CD4-positive, alpha-beta memory T cell (primary cell): ENCODE measurements at regions of chr2 and their contacts with region 1.

Region 1: DNA sequence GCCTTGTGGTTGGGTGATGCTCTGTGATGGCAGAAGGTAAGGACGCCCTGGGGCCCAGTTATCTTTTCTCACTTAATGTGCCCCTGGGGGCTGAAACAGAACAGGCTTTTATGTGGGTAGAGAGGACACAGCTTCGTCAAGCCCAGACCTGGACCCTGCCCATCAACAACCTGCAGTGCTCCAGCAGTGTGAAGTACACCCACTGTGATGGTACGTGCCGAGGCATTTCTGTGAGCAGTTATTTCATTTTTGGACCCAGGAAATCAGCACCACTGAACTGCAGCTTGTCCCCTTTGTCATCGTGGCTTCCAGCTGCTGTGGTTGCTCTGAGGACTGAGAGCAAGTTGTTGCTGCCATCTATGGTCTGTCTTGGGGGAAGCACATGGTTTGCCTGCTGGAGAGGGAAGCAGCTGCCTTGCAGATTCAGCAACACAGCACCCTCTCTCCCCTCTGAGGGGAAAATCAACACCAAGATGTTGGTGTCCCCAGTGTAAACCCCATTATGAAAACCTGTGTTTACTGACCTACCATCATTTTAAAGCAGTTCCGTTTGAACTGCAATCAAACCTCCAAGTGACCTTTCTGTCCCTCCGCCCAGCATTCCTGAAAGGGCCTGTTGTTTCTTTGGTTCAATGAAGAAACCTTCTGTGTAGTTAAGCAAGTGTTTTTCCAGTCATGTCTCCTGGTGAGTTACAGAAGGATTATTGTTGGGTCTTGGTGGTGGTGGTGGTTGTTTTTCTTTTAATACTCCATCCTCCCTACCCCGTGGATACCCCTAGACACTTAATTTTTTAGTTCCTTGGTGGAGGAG is 158.2 kb downstream of the MGAT5 start:
- DNase-seq: peak; percentile 68 to 77 (median 73)
- H3K4me3 ChIP-seq: no peak overlapping the region
- H3K4me3 Mint-ChIP-seq: peak overlapping the region in 4 of 8 donors; percentile 6 to 18 (median 14)
- H3K27ac ChIP-seq: no peak overlapping the region
- H3K27ac Mint-ChIP-seq: peak overlapping the region in 6 of 7 donors; percentile 36 to 83 (median 56)
- H3K4me1 ChIP-seq: peaks cover 51% of the 10 kb centered on the region
- H3K4me1 Mint-ChIP-seq: peaks cover 48 to 56% (median 54%) of the 10 kb centered on the region in 4 donors
- H3K27me3 ChIP-seq: no peaks in the 10 kb centered on the region
- H3K27me3 Mint-ChIP-seq: no peaks in the 10 kb centered on the region

Region 2: DNA sequence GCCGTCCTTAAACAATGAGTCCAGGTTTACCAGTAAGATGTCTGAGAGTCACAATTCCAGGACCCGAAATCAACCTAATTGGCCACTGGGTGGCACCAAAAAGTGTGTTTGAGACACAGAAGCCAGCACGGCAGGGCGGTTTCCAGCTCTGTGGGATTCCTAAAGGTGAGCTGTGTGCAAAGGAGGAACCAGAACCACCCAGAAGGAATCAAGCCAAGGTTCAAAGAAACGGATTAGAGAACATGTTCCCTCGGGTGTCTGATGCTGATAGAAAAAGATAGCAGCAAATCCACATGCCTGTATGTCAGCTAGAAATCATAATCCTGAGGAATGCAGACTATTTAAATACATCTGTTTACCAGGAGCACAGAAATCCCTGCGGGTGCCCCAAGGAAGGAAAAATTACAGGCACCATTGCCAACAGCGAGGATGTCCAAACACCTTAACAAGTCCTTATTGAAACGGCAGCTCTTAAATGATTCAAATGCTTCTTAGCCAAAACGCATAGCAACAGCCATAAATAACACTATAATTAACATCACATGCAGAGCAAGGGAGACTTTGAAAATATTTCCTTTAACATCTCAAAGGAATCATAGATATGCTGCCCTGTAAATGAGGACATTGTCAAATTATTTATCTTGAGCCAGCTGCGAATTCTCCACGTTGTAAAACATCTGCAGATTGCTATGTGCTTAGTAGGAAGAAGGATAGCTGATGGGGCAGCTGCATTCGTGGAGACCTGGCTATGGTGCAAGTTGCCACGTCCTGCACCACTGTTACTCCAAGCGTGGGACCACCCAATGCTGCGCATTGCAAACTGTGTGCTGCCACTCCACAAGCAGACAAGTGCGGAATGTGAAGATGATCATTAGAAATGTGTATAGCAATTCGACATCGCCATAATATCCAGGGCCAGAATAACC is 525.0 kb before region 1 on chr2:
- CTCF ChIA-PET with region 1: interaction called, 53 read pairs
- POLR2A ChIA-PET with region 1: no interaction called
- intact Hi-C with region 1: loop called (anchors 1 kb)
- DNase-seq: peak; percentile 43 to 50 (median 50)
- H3K4me3 ChIP-seq: no peak overlapping the region
- H3K4me3 Mint-ChIP-seq: no peak overlapping the region
- H3K27ac ChIP-seq: no peak overlapping the region
- H3K27ac Mint-ChIP-seq: no peak overlapping the region
- H3K4me1 ChIP-seq: no peaks in the 10 kb centered on the region
- H3K4me1 Mint-ChIP-seq: peaks cover 0 to 2% (median under 1%) of the 10 kb centered on the region in 4 donors
- H3K27me3 ChIP-seq: no peaks in the 10 kb centered on the region
- H3K27me3 Mint-ChIP-seq: peaks cover 0 to 7% of the 10 kb centered on the region in 2 donors

Region 3: DNA sequence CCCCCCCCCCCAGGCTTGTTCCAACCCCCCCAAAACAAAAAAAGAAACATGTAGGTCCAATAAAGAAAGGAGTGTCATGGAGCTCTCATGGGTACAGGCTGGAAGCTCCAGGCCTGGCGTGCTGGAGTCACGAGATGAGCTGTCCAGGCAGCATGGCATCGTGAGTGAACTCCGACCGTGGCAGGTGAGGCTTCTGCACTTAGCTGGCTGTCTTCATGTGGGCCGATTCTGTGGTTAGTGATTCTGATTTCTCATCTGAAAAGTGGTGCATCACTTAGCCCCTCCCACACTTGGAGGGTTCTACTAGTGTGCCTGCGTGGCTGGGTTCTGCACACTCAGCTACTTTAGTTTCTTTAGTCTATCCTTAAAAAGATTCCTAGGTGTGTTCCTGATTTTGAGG is 284.5 kb before region 1 on chr2:
- CTCF ChIA-PET with region 1: interaction called, 14 read pairs
- POLR2A ChIA-PET with region 1: interaction called, 58 read pairs
- intact Hi-C with region 1: no loop called
- DNase-seq: peak; percentile 21 to 59 (median 34)
- H3K4me3 ChIP-seq: no peak overlapping the region
- H3K4me3 Mint-ChIP-seq: peak overlapping the region in 7 of 8 donors; percentile 47 to 82 (median 63)
- H3K27ac ChIP-seq: no peak overlapping the region
- H3K27ac Mint-ChIP-seq: peak overlapping the region; percentile 12 to 85 (median 73)
- H3K4me1 ChIP-seq: peaks cover 82% of the 10 kb centered on the region
- H3K4me1 Mint-ChIP-seq: peaks cover 67 to 92% (median 80%) of the 10 kb centered on the region in 4 donors
- H3K27me3 ChIP-seq: no peaks in the 10 kb centered on the region
- H3K27me3 Mint-ChIP-seq: no peaks in the 10 kb centered on the region

Region 4: GRCh38 chr2:134198006-134198634 is 213.9 kb before region 1 on chr2:
- CTCF ChIA-PET with region 1: interaction called, 11 read pairs
- POLR2A ChIA-PET with region 1: no interaction called
- intact Hi-C with region 1: no loop called
- DNase-seq: no peak
- H3K4me3 ChIP-seq: no peak overlapping the region
- H3K4me3 Mint-ChIP-seq: peak overlapping the region; percentile 18 to 82 (median 74)
- H3K27ac ChIP-seq: no peak overlapping the region
- H3K27ac Mint-ChIP-seq: peak overlapping the region; percentile 72 to 88 (median 83)
- H3K4me1 ChIP-seq: peaks cover 87% of the 10 kb centered on the region
- H3K4me1 Mint-ChIP-seq: peaks cover 73 to 94% (median 84%) of the 10 kb centered on the region in 4 donors
- H3K27me3 ChIP-seq: no peaks in the 10 kb centered on the region
- H3K27me3 Mint-ChIP-seq: no peaks in the 10 kb centered on the region

Region 5: DNA sequence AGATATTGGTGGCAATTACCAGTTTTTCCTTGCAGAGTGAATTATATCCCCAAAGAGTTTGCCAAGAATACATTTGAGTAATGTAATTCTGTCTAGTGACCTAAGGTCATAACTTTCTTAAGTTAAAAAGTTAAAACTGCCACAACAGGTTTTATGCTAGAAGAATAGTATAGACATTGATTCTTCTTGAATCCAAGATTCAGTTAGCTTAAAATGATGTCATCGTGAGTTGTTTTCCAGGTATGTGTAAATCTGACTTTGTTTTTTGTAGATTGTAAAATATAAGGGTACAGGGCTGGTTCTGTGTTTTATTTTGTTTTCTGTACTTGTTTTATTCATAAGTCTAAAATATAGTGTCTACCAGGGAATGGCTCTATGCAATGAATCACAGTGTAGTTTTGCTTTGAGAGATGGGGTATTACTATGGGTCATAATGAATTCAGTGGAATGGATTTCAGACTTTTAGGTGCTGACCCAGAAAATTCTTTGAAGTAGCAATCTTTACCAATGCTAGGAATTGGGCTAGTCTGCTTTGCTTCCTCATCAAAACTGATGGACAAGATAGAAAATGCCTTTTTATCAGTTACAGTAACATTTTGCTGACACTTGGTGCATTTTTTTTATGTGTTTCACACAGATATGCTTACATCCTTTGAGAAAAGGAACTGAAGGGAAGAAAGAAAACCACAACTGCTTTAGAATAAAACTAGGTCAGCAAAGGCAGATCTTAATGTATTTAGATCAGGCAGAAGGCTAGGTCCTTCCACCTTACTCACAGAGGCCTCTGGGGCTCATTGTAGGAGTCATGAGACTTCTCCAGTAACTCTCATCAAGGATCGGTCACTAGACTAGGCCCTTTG is 178.9 kb before region 1 on chr2:
- CTCF ChIA-PET with region 1: interaction called, 11 read pairs
- POLR2A ChIA-PET with region 1: interaction called, 3 read pairs
- intact Hi-C with region 1: no loop called
- DNase-seq: peak; percentile 65 to 77 (median 69)
- H3K4me3 ChIP-seq: peak overlapping the region in 1 of 2 donors; percentile 30
- H3K4me3 Mint-ChIP-seq: peak overlapping the region; percentile 56 to 86 (median 78)
- H3K27ac ChIP-seq: peak overlapping the region; percentile 55
- H3K27ac Mint-ChIP-seq: peak overlapping the region; percentile 83 to 97 (median 92)
- H3K4me1 ChIP-seq: peaks cover 94% of the 10 kb centered on the region
- H3K4me1 Mint-ChIP-seq: peaks cover 75 to 94% (median 87%) of the 10 kb centered on the region in 4 donors
- H3K27me3 ChIP-seq: no peaks in the 10 kb centered on the region
- H3K27me3 Mint-ChIP-seq: no peaks in the 10 kb centered on the region

Region 6: GRCh38 chr2:134261398-134262131 is 150.5 kb before region 1 on chr2:
- CTCF ChIA-PET with region 1: interaction called, 11 read pairs
- POLR2A ChIA-PET with region 1: interaction called, 4 read pairs
- intact Hi-C with region 1: no loop called
- DNase-seq: no peak
- H3K4me3 ChIP-seq: no peak overlapping the region
- H3K4me3 Mint-ChIP-seq: peak overlapping the region; percentile 2 to 59 (median 44)
- H3K27ac ChIP-seq: no peak overlapping the region
- H3K27ac Mint-ChIP-seq: peak overlapping the region; percentile 48 to 89 (median 86)
- H3K4me1 ChIP-seq: peaks cover 70% of the 10 kb centered on the region
- H3K4me1 Mint-ChIP-seq: peaks cover 67 to 80% (median 68%) of the 10 kb centered on the region in 4 donors
- H3K27me3 ChIP-seq: no peaks in the 10 kb centered on the region
- H3K27me3 Mint-ChIP-seq: no peaks in the 10 kb centered on the region

Region 7: GRCh38 chr2:134348239-134348638 is 63.8 kb before region 1 on chr2:
- CTCF ChIA-PET with region 1: no interaction called
- POLR2A ChIA-PET with region 1: no interaction called
- intact Hi-C with region 1: no loop called
- DNase-seq: no peak
- H3K4me3 ChIP-seq: no peak overlapping the region
- H3K4me3 Mint-ChIP-seq: peak overlapping the region in 1 of 8 donors; percentile 28
- H3K27ac ChIP-seq: no peak overlapping the region
- H3K27ac Mint-ChIP-seq: peak overlapping the region in 3 of 7 donors; percentile 30 to 54 (median 48)
- H3K4me1 ChIP-seq: no peaks in the 10 kb centered on the region
- H3K4me1 Mint-ChIP-seq: peaks cover 0 to 23% (median 12%) of the 10 kb centered on the region in 4 donors
- H3K27me3 ChIP-seq: no peaks in the 10 kb centered on the region
- H3K27me3 Mint-ChIP-seq: no peaks in the 10 kb centered on the region

Region 8: GRCh38 chr2:134425724-134426496 is 13.9 kb after region 1 on chr2:
- CTCF ChIA-PET with region 1: interaction called, 14 read pairs
- POLR2A ChIA-PET with region 1: interaction called, 5 read pairs
- intact Hi-C with region 1: no loop called
- DNase-seq: no peak
- H3K4me3 ChIP-seq: no peak overlapping the region
- H3K4me3 Mint-ChIP-seq: no peak overlapping the region
- H3K27ac ChIP-seq: no peak overlapping the region
- H3K27ac Mint-ChIP-seq: peak overlapping the region in 4 of 7 donors; percentile 86 to 92 (median 88)
- H3K4me1 ChIP-seq: no peaks in the 10 kb centered on the region
- H3K4me1 Mint-ChIP-seq: peaks cover 0 to 7% (median under 1%) of the 10 kb centered on the region in 4 donors
- H3K27me3 ChIP-seq: no peaks in the 10 kb centered on the region
- H3K27me3 Mint-ChIP-seq: no peaks in the 10 kb centered on the region

Region 9: DNA sequence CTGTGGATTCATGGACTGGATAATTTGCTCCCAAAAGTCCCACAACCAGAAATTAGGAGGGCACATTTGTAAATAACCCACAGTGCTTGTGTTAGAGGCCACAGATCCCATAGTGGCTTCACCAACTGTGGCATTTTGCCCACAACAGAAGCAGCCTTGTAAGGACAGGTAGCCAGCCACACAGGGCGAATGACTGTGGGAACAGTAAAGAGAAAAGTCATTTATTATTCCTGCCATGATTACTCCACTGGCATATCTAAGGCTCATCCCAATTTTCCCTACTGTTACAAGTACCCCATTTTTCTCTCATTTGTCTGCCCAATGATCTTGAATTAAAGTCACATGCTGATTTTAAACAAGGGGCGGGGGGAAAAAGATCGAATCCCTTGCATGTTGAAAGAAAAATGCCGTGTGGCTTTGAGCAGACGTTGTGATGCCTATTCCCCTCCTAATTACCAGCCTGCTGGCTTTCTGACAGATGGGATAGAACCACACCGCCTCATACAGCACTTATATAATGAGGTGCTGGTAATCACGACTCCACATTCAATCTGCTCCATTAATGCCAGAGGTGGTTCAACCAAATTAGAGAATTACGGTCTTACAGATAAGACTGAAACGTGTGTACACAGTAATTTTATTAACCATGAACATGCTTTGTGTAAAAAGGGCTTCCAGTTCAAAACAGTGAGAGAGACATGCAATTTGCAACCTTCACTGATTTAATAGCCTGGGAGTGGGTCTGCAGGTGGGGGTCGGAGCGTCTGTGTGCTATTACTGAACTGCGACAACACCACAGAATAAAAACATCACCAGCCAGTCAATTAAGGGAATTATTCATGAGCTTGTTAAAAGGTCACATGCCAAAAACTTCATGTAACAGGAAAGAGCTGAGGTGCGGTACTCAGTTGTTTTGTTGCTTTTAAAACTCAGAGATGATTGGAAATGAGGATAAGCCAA is 110.7 kb after region 1 on chr2:
- CTCF ChIA-PET with region 1: no interaction called
- POLR2A ChIA-PET with region 1: no interaction called
- intact Hi-C with region 1: no loop called
- DNase-seq: no peak
- H3K4me3 ChIP-seq: no peak overlapping the region
- H3K4me3 Mint-ChIP-seq: no peak overlapping the region
- H3K27ac ChIP-seq: no peak overlapping the region
- H3K27ac Mint-ChIP-seq: no peak overlapping the region
- H3K4me1 ChIP-seq: no peaks in the 10 kb centered on the region
- H3K4me1 Mint-ChIP-seq: no peaks in the 10 kb centered on the region
- H3K27me3 ChIP-seq: no peaks in the 10 kb centered on the region
- H3K27me3 Mint-ChIP-seq: peaks cover 3 to 8% of the 10 kb centered on the region in 2 donors